PC-9 (cell line): ENCODE measurements at regions of chr9 and their contacts with region 1.

Region 1: GRCh38 chr9:131149688-131150053 is 24.3 kb downstream of the NUP214 start:
- DNase-seq: no peak
- H3K4me3 ChIP-seq: no peak overlapping the region
- H3K27ac ChIP-seq: no peak overlapping the region
- H3K4me1 ChIP-seq: no peaks in the 10 kb centered on the region
- H3K27me3 ChIP-seq: no peaks in the 10 kb centered on the region
- CTCF ChIP-seq: no peak

Region 2: GRCh38 chr9:131459056-131459455 is 309.4 kb after region 1 on chr9:
- CTCF ChIA-PET with region 1: no interaction called
- POLR2A ChIA-PET with region 1: no interaction called
- intact Hi-C with region 1: loop called (anchors 10 kb)
- DNase-seq: no peak
- H3K4me3 ChIP-seq: no peak overlapping the region
- H3K27ac ChIP-seq: no peak overlapping the region
- H3K4me1 ChIP-seq: no peaks in the 10 kb centered on the region
- H3K27me3 ChIP-seq: no peaks in the 10 kb centered on the region
- CTCF ChIP-seq: no peak